ENCODE measurements at regions of chr2 and their contacts with region 1.

Region 1: GRCh38 chr2:197293252-197294007 is 17.1 kb downstream of the ANKRD44 start:
- DNase-seq: peak in 5 of 14 experiments; percentile 16 to 75 (median 55)
- ATAC-seq: peak; percentile 74
- H3K4me3 ChIP-seq: peak overlapping the region; percentile 28
- H3K4me3 Mint-ChIP-seq: peak overlapping the region; percentile 64
- H3K27ac ChIP-seq: peak overlapping the region; percentile 70 to 78
- H3K27ac Mint-ChIP-seq: peak overlapping the region; percentile 95
- H3K4me1 ChIP-seq: peaks cover 59% of the 10 kb centered on the region
- H3K4me1 Mint-ChIP-seq: peaks cover 92% of the 10 kb centered on the region
- H3K27me3 ChIP-seq: no peaks in the 10 kb centered on the region
- H3K27me3 Mint-ChIP-seq: no peaks in the 10 kb centered on the region
- CTCF ChIP-seq: no peak

Region 2: GRCh38 chr2:197279997-197280746 is 13.3 kb before region 1 on chr2:
- CTCF ChIA-PET with region 1: interaction called, 4 read pairs
- POLR2A ChIA-PET with region 1: interaction called, 32 read pairs
- intact Hi-C with region 1: no loop called
- DNase-seq: no peak
- ATAC-seq: peak; percentile 67
- H3K4me3 ChIP-seq: no peak overlapping the region
- H3K4me3 Mint-ChIP-seq: peak overlapping the region; percentile 30
- H3K27ac ChIP-seq: peak overlapping the region; percentile 33 to 46
- H3K27ac Mint-ChIP-seq: peak overlapping the region; percentile 80
- H3K4me1 ChIP-seq: peaks cover 83% of the 10 kb centered on the region
- H3K4me1 Mint-ChIP-seq: peaks cover 86% of the 10 kb centered on the region
- H3K27me3 ChIP-seq: no peaks in the 10 kb centered on the region
- H3K27me3 Mint-ChIP-seq: no peaks in the 10 kb centered on the region
- CTCF ChIP-seq: no peak

Measured in CD4-positive, alpha-beta T cell (primary cell).